Activated CD8-positive, alpha-beta T cell treated with anti-CD3 and anti-CD28 coated beads for 36 hours (primary cell): ENCODE measurements at regions of chr9 and their contacts with region 1.

Region 1: DNA sequence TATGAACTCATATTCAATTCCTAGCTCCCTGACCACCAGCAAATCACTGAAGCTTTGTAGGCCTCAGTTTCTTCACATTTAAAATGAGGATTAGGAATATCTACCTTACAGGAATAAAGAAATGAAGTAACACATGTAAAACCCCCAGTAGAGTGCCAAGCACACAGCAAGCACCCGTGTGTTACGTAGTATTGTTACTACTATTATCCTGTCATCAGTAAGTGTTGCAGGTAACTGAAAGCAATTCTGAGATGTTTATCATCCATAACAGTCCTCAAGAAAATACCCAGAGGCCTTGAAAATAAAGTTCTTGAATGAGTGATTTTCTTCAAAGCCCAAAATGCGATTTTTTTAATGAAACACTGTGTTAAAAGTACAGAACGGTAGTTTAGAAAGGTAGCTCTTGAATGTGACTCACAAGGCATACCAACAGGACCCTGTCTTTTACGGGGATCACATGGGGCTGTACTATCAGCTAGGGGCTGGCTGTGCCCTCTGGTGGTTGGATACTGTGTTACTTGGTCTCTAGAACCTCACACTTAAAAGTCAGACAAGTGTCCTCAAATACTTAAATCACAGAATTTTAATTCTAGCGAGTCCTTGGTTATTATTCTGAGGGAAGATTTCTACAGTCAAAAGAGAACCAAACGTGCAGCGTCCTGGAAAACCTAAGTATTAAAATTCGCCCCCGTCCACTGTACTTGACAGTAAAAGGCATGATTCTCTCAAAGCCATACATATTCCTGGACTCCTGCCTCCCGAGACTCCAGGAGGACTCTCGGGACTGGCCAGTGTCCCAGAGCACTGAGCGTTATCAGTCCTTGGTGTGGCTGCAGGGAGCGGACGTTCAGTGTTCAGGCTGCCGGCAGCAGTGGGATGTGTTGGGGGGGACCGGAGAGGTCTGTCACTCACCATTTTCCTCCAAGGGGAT is 725 bp downstream of the NDUFB6 start:
- DNase-seq: peak; percentile 89
- ATAC-seq: peak; percentile 90
- H3K4me3 Mint-ChIP-seq: peak overlapping the region; percentile 96
- H3K27ac Mint-ChIP-seq: peak overlapping the region; percentile 94
- H3K4me1 Mint-ChIP-seq: peaks cover 29% of the 10 kb centered on the region
- H3K27me3 Mint-ChIP-seq: no peaks in the 10 kb centered on the region
- CTCF ChIP-seq: peak; percentile 83

Region 2: DNA sequence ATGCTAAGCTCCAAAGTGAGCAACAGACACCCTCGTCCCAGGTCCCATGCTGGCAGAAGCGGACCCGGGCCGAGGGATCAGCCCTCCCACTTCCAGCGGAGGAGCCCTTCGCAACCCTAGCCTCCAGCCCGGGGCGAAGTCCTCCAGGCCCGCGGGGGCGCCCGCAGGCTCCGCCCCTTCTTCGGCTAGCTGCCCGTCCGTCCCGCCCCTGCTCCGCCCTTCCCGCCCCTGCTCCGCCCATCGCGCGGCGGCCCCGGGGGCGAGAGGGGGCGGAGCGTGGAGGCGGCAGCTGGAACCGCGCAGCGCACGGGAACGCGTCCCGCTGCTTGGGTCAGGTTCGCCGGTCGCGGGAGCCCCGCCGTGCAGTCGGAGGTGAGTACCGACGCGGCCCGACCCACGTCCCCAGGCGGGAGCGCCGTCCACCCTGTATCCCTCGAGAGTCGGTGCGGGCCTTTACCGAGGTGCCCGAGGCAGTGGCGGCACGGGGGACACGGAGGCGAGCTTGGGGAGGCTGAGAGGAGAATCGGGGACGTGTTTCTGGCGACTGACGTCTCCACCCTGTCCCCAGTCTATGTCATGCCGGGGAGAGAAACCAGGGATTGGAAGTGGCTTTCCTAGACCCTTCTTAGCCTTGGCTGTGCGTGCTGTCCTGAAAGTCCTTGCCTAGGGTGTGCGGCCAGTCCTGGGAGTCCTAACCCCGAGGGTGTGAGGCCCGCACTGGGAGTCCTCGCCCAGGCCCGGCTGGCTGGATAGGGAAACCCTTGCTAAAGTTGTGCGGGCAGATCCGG is 187.7 kb before region 1 on chr9 and contains the start of gene ACO1:
- CTCF ChIA-PET with region 1: interaction called, 477 read pairs
- POLR2A ChIA-PET with region 1: no interaction called
- intact Hi-C with region 1: no loop called
- DNase-seq: peak; percentile 83
- ATAC-seq: peak; percentile 97
- H3K4me3 Mint-ChIP-seq: peak within 1 kb of the TSS; percentile 81
- H3K27ac Mint-ChIP-seq: no peak within 1 kb of the TSS
- H3K4me1 Mint-ChIP-seq: peaks cover 17% of the 10 kb centered on the region
- H3K27me3 Mint-ChIP-seq: peaks cover 12% of the 10 kb centered on the region
- CTCF ChIP-seq: no peak
- total RNA-seq, gene ACO1: 15.3 to 15.7 TPM

Region 3: GRCh38 chr9:32550562-32551433 is 21.4 kb before region 1 on chr9:
- CTCF ChIA-PET with region 1: interaction called, 22 read pairs
- POLR2A ChIA-PET with region 1: interaction called, 13 read pairs
- intact Hi-C with region 1: loop called (anchors 1 kb)
- DNase-seq: peak; percentile 95
- ATAC-seq: peak; percentile 72
- H3K4me3 Mint-ChIP-seq: peak overlapping the region; percentile 86
- H3K27ac Mint-ChIP-seq: peak overlapping the region; percentile 100
- H3K4me1 Mint-ChIP-seq: peaks cover 50% of the 10 kb centered on the region
- H3K27me3 Mint-ChIP-seq: no peaks in the 10 kb centered on the region
- CTCF ChIP-seq: no peak

Region 4: DNA sequence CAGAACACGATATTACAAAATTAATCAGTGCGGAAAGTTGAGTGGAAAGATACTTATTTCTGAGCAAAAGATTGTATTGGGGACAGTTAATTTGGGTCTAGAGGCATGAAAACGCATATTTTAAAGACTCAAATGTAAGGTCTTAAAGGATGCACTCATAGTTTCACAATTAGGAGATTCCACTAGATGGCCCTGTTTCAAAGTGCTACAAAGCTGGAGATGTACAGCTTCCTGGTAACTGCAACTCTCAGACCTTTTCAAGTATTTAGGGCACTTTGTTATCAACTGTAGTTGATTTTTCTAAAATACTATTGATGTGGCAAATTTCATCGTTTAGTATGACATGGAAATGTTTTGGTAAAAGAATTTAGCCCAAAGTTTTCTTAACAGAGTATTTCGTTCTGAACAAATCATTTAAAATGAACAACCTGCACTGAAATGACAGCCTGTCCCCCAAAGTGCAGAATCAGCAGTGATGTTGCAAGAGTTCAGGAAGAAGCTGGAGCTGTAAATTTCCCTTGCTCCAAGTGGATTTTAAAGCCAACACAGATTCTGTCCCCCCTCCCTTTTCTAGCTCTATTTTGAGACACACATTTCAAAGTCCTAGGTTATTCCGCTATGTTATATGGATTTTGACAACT is 17.0 kb after region 1 on chr9:
- CTCF ChIA-PET with region 1: interaction called, 22 read pairs
- POLR2A ChIA-PET with region 1: no interaction called
- intact Hi-C with region 1: no loop called
- DNase-seq: no peak
- ATAC-seq: peak; percentile 47
- H3K4me3 Mint-ChIP-seq: no peak overlapping the region
- H3K27ac Mint-ChIP-seq: no peak overlapping the region
- H3K4me1 Mint-ChIP-seq: no peaks in the 10 kb centered on the region
- H3K27me3 Mint-ChIP-seq: peaks cover 19% of the 10 kb centered on the region
- CTCF ChIP-seq: no peak

Region 5: GRCh38 chr9:32801530-32801929 is 229.3 kb after region 1 on chr9:
- CTCF ChIA-PET with region 1: no interaction called
- POLR2A ChIA-PET with region 1: no interaction called
- intact Hi-C with region 1: no loop called
- DNase-seq: no peak
- ATAC-seq: no peak
- H3K4me3 Mint-ChIP-seq: no peak overlapping the region
- H3K27ac Mint-ChIP-seq: no peak overlapping the region
- H3K4me1 Mint-ChIP-seq: no peaks in the 10 kb centered on the region
- H3K27me3 Mint-ChIP-seq: peaks cover 8% of the 10 kb centered on the region
- CTCF ChIP-seq: no peak